H1 (cell line): ENCODE measurements at regions of chr1 and their contacts with region 1.

Region 1: GRCh38 chr1:85148524-85149250 is 52.1 kb downstream of the SYDE2 start:
- DNase-seq: no peak
- H3K4me3 ChIP-seq: no peak overlapping the region
- H3K27ac ChIP-seq: no peak overlapping the region
- H3K4me1 ChIP-seq: peaks cover 3 to 14% (median 11%) of the 10 kb centered on the region in 4 experiments; a peak in 5 of 7 replicates
- H3K27me3 ChIP-seq: no peaks in the 10 kb centered on the region
- CTCF ChIP-seq: no peak
- EP300 ChIP-seq: no peak
- POLR2A ChIP-seq: no peak
- RAD21 ChIP-seq: no peak

Region 2: GRCh38 chr1:85137684-85138111 is 11.0 kb before region 1 on chr1:
- CTCF ChIA-PET with region 1: interaction called, 12 read pairs
- POLR2A ChIA-PET with region 1: no interaction called
- DNase-seq: no peak
- H3K4me3 ChIP-seq: no peak overlapping the region
- H3K27ac ChIP-seq: no peak overlapping the region
- H3K4me1 ChIP-seq: no peaks in the 10 kb centered on the region
- H3K27me3 ChIP-seq: no peaks in the 10 kb centered on the region
- CTCF ChIP-seq: no peak
- EP300 ChIP-seq: no peak
- POLR2A ChIP-seq: no peak
- RAD21 ChIP-seq: no peak

Region 3: DNA sequence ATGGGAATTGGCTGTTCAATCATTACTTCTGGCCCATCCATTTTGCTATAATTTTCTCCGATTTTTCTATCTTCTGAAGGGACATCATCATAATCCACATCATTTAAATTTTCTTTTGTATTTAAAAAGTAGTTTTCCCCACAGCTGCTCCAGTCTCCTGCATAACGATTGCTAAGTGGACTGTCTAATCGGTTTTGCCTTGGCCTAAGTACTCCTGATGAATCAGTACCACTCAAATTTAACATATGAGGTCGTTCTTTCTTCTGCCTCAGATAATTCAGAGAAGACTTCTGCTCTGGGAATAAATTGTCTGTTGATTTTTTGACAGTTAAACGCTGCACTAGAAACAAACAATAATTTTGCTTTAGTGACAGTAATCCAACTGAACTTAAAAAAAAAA is 10.2 kb after region 1 on chr1:
- CTCF ChIA-PET with region 1: interaction called, 13 read pairs
- POLR2A ChIA-PET with region 1: interaction called, 4 read pairs
- DNase-seq: no peak
- H3K4me3 ChIP-seq: no peak overlapping the region
- H3K27ac ChIP-seq: no peak overlapping the region
- H3K4me1 ChIP-seq: no peaks in the 10 kb centered on the region
- H3K27me3 ChIP-seq: no peaks in the 10 kb centered on the region
- CTCF ChIP-seq: no peak
- EP300 ChIP-seq: no peak
- POLR2A ChIP-seq: no peak
- RAD21 ChIP-seq: no peak